ENCODE measurements at regions of chr11 and their contacts with region 1.

Region 1: DNA sequence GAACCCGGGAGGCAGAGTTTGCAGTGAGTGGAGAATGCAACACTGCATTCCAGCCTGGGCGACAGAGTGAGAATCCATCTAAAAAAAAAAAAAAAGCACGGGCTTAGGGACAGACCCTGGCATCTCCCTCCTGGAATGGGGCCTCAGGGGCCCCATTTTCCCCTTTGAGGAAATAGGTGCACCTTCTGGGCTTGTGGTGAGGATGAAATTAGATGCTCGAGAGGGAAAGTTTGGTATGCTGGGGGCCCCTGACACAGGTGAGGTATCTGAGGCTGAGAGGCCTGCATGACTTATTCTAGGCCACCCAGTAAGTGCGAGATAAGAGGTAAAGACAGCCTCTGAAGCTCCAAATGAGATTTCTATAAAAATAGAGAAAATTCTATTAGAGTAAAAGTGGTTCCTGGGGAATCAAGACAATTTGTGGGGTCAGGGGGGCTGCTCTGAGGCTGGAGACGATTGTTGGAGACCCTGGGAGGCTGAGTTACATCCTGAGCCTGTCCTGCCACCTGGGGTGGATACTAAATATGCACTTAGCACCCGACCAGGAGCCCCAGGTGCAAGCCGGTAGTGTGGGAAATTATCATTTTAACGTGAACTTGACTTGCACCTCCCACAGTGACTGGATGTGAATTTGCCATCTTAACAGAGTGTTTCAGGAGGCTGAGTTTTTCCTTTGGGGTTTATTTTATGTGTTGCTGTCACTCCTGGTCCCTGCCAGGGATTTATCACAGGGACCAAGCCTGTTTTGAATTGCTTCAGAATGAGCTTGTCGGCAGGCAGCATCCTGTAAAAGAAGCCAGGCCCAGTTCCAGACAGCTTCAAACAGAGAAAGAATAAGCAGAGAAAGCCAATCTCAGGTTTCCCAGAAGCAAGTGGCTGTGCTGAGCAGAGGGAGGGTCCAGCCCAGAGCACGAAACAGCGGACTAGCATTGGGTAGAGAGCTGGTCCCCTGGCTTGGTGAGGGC is 48.4 kb upstream of the TSKU start:
- DNase-seq: no peak
- H3K4me3 ChIP-seq: no peak overlapping the region
- H3K27ac ChIP-seq: peak overlapping the region in 1 of 2 donors; percentile 16
- H3K4me1 ChIP-seq: no peaks in the 10 kb centered on the region
- H3K27me3 ChIP-seq: no peaks in the 10 kb centered on the region
- CTCF ChIP-seq: no peak
- POLR2A ChIP-seq: no peak

Region 2: DNA sequence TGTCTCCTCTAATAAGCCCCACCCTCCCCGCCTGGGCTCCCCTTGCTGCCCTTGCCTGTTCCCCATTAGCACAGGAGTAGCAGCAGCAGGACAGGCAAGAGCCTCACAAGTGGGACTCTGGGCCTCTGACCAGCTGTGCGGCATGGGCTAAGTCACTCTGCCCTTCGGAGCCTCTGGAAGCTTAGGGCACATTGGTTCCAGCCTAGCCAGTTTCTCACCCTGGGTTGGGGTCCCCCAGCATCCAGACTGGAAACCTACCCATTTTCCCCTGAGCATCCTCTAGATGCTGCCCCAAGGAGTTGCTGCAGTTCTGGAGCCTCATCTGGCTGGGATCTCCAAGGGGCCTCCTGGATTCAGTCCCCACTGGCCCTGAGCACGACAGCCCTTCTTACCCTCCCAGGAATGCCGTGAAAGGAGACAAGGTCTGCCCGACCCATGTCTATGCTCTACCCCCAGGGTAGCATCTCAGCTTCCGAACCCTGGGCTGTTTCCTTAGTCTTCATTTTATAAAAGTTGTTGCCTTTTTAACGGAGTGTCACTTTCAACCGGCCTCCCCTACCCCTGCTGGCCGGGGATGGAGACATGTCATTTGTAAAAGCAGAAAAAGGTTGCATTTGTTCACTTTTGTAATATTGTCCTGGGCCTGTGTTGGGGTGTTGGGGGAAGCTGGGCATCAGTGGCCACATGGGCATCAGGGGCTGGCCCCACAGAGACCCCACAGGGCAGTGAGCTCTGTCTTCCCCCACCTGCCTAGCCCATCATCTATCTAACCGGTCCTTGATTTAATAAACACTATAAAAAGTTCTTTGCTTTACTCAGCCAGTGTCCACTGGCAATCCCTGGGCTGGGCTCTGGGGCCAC is 62.8 kb after region 1 on chr11:
- intact Hi-C with region 1: loop called (anchors 2 kb)
- DNase-seq: peak in 1 of 2 donors; percentile 13
- H3K4me3 ChIP-seq: no peak overlapping the region
- H3K27ac ChIP-seq: peak overlapping the region; percentile 52 to 75
- H3K4me1 ChIP-seq: no peaks in the 10 kb centered on the region
- H3K27me3 ChIP-seq: no peaks in the 10 kb centered on the region
- CTCF ChIP-seq: no peak
- POLR2A ChIP-seq: no peak

Region 3: GRCh38 chr11:76919887-76920746 is 185.4 kb after region 1 on chr11:
- intact Hi-C with region 1: loop called (anchors 5 kb)
- DNase-seq: peak; percentile 64 to 75
- H3K4me3 ChIP-seq: no peak overlapping the region
- H3K27ac ChIP-seq: no peak overlapping the region
- H3K4me1 ChIP-seq: no peaks in the 10 kb centered on the region
- H3K27me3 ChIP-seq: no peaks in the 10 kb centered on the region
- CTCF ChIP-seq: peak; percentile 78 to 92 (median 80)
- POLR2A ChIP-seq: no peak

Measured in uterus (tissue), 4 donors.